Activated B cell treated with CpG ODN at 0.5 μM for 24 hours (primary cell): ENCODE measurements at regions of chr7 and their contacts with region 1.

Region 1: GRCh38 chr7:44638611-44639557 is 32.5 kb downstream of the OGDH start:
- DNase-seq: peak; percentile 69
- ATAC-seq: peak; percentile 82
- H3K4me3 Mint-ChIP-seq: peak overlapping the region; percentile 84
- H3K27ac Mint-ChIP-seq: peak overlapping the region; percentile 97
- H3K4me1 Mint-ChIP-seq: peaks cover 64% of the 10 kb centered on the region
- H3K27me3 Mint-ChIP-seq: no peaks in the 10 kb centered on the region
- CTCF ChIP-seq: no peak

Region 2: DNA sequence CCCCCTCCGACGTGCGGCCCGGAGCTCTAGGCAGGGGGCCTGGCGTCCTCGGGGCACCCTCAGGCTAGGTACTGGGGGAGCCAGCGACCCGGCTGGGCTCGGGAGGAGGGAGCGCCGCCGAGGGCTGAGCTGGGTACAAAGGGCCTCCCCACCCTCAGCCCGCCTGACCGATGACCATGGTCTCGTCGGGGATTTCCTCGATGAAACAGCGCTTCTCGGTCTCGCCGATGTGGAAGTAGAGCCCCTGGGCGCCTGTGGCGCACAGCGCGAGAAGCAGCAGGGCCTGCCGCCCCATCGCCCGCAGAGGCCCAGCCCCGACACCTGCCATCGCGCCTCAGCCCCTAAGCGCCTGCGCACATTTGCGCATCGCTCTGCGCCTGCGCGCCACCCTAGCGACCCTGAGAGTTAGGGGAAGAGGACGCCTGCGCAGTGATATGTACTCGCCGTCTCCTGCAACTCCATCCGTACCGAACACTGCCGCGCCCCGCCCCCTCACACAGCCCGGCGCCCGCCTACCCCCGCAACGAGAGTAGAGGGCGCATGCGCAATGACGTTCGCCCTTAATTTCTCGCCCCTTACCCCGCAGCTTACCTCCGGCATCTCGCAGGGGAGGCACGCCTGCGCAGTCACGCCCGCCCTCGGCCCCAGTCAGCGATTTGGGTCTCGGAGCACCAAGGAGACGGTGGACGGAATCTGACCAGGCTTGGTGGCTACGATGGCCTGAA is 56.8 kb before region 1 on chr7 and contains the start of gene TMED4:
- CTCF ChIA-PET with region 1: no interaction called
- POLR2A ChIA-PET with region 1: interaction called, 34 read pairs
- intact Hi-C with region 1: no loop called
- DNase-seq: peak; percentile 100
- ATAC-seq: peak; percentile 90
- H3K4me3 Mint-ChIP-seq: peak within 1 kb of the TSS; percentile 90
- H3K27ac Mint-ChIP-seq: peak within 1 kb of the TSS; percentile 95
- H3K4me1 Mint-ChIP-seq: peaks cover 29% of the 10 kb centered on the region
- H3K27me3 Mint-ChIP-seq: peaks cover 2% of the 10 kb centered on the region
- CTCF ChIP-seq: no peak
- total RNA-seq, gene TMED4: 61.7 and 70.1 TPM in 2 replicates

Region 3: GRCh38 chr7:44606450-44607254 is 32.2 kb before region 1 on chr7 and contains the start of gene OGDH:
- CTCF ChIA-PET with region 1: interaction called, 6 read pairs
- POLR2A ChIA-PET with region 1: interaction called, 257 read pairs
- intact Hi-C with region 1: loop called (anchors 1 kb)
- DNase-seq: peak; percentile 100
- ATAC-seq: peak; percentile 94
- H3K4me3 Mint-ChIP-seq: peak within 1 kb of the TSS; percentile 98
- H3K27ac Mint-ChIP-seq: peak within 1 kb of the TSS; percentile 98
- H3K4me1 Mint-ChIP-seq: peaks cover 45% of the 10 kb centered on the region
- H3K27me3 Mint-ChIP-seq: no peaks in the 10 kb centered on the region
- CTCF ChIP-seq: no peak
- total RNA-seq, gene OGDH: 79.5 and 81.7 TPM in 2 replicates

Region 4: GRCh38 chr7:44650772-44651171 is 11.9 kb after region 1 on chr7:
- CTCF ChIA-PET with region 1: interaction called, 4 read pairs
- POLR2A ChIA-PET with region 1: interaction called, 11 read pairs
- intact Hi-C with region 1: no loop called
- DNase-seq: no peak
- ATAC-seq: no peak
- H3K4me3 Mint-ChIP-seq: no peak overlapping the region
- H3K27ac Mint-ChIP-seq: no peak overlapping the region
- H3K4me1 Mint-ChIP-seq: peaks cover 6% of the 10 kb centered on the region
- H3K27me3 Mint-ChIP-seq: no peaks in the 10 kb centered on the region
- CTCF ChIP-seq: no peak

Region 5: GRCh38 chr7:44695381-44696155 is 56.7 kb after region 1 on chr7:
- CTCF ChIA-PET with region 1: no interaction called
- POLR2A ChIA-PET with region 1: no interaction called
- intact Hi-C with region 1: no loop called
- DNase-seq: no peak
- ATAC-seq: no peak
- H3K4me3 Mint-ChIP-seq: no peak overlapping the region
- H3K27ac Mint-ChIP-seq: no peak overlapping the region
- H3K4me1 Mint-ChIP-seq: no peaks in the 10 kb centered on the region
- H3K27me3 Mint-ChIP-seq: no peaks in the 10 kb centered on the region
- CTCF ChIP-seq: no peak

Region 6: GRCh38 chr7:44914992-44915607 is 276.2 kb after region 1 on chr7:
- CTCF ChIA-PET with region 1: no interaction called
- POLR2A ChIA-PET with region 1: interaction called, 3 read pairs
- intact Hi-C with region 1: loop called (anchors 1 kb)
- DNase-seq: peak; percentile 53
- ATAC-seq: peak; percentile 95
- H3K4me3 Mint-ChIP-seq: peak overlapping the region; percentile 41
- H3K27ac Mint-ChIP-seq: peak overlapping the region; percentile 78
- H3K4me1 Mint-ChIP-seq: peaks cover 11% of the 10 kb centered on the region
- H3K27me3 Mint-ChIP-seq: no peaks in the 10 kb centered on the region
- CTCF ChIP-seq: no peak

Region 7: GRCh38 chr7:45267266-45267665 is 628.4 kb after region 1 on chr7:
- CTCF ChIA-PET with region 1: no interaction called
- POLR2A ChIA-PET with region 1: no interaction called
- intact Hi-C with region 1: no loop called
- DNase-seq: no peak
- ATAC-seq: no peak
- H3K4me3 Mint-ChIP-seq: no peak overlapping the region
- H3K27ac Mint-ChIP-seq: no peak overlapping the region
- H3K4me1 Mint-ChIP-seq: no peaks in the 10 kb centered on the region
- H3K27me3 Mint-ChIP-seq: peaks cover 16% of the 10 kb centered on the region
- CTCF ChIP-seq: no peak